ENCODE measurements at regions of chr7 and their contacts with region 1.

Region 1: GRCh38 chr7:156892821-156893706 is at the start of gene LMBR1:
- DNase-seq: peak; percentile 94 to 97
- ATAC-seq: peak; percentile 95 to 96 (median 96)
- H3K4me3 ChIP-seq: peak within 1 kb of the TSS; percentile 94
- H3K27ac ChIP-seq: peak within 1 kb of the TSS; percentile 94
- H3K4me1 ChIP-seq: peaks cover 26% of the 10 kb centered on the region
- H3K27me3 ChIP-seq: no peaks in the 10 kb centered on the region
- CTCF ChIP-seq: peak; percentile 65
- total RNA-seq, gene LMBR1: 21.7 to 33.3 (median 27.9) TPM

Region 2: DNA sequence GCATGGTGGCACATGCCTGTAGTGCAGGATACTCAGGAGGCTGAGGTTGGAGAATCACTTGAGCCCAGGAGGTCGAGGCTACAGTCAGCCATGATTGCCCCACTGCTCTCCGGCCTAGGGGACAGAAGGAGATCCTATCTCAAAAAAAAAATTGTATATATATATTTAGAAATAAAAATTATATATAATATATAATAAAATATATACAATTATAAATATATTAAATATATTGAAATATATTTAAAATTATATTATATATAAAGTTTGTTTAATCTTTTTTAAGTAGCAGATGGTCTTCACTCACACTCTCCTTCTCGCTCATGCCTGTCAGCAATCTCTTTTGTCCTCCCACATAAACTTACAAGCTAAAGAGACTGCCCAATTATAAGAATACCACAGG is 58.6 kb before region 1 on chr7:
- intact Hi-C with region 1: loop called in 1 of 2 experiments (anchors 2 kb)
- DNase-seq: no peak
- ATAC-seq: no peak
- H3K4me3 ChIP-seq: no peak overlapping the region
- H3K27ac ChIP-seq: no peak overlapping the region
- H3K4me1 ChIP-seq: peaks cover 9% of the 10 kb centered on the region
- H3K27me3 ChIP-seq: no peaks in the 10 kb centered on the region
- CTCF ChIP-seq: no peak

Region 3: GRCh38 chr7:156949541-156950380 is 56.7 kb after region 1 on chr7 and contains the start of gene NOM1:
- intact Hi-C with region 1: loop called in 1 of 2 experiments (anchors 2 kb)
- DNase-seq: peak; percentile 93 to 96
- ATAC-seq: peak; percentile 97 to 99 (median 99)
- H3K4me3 ChIP-seq: peak within 1 kb of the TSS; percentile 97
- H3K27ac ChIP-seq: peak within 1 kb of the TSS; percentile 75
- H3K4me1 ChIP-seq: peaks cover 19% of the 10 kb centered on the region
- H3K27me3 ChIP-seq: peaks cover 0 to 9% (median 0%) of the 10 kb centered on the region in 3 donors
- CTCF ChIP-seq: peak; percentile 97
- total RNA-seq, gene NOM1: 14.0 to 20.5 (median 16.7) TPM